ENCODE measurements at regions of chr11 and their contacts with region 1.

Region 1: DNA sequence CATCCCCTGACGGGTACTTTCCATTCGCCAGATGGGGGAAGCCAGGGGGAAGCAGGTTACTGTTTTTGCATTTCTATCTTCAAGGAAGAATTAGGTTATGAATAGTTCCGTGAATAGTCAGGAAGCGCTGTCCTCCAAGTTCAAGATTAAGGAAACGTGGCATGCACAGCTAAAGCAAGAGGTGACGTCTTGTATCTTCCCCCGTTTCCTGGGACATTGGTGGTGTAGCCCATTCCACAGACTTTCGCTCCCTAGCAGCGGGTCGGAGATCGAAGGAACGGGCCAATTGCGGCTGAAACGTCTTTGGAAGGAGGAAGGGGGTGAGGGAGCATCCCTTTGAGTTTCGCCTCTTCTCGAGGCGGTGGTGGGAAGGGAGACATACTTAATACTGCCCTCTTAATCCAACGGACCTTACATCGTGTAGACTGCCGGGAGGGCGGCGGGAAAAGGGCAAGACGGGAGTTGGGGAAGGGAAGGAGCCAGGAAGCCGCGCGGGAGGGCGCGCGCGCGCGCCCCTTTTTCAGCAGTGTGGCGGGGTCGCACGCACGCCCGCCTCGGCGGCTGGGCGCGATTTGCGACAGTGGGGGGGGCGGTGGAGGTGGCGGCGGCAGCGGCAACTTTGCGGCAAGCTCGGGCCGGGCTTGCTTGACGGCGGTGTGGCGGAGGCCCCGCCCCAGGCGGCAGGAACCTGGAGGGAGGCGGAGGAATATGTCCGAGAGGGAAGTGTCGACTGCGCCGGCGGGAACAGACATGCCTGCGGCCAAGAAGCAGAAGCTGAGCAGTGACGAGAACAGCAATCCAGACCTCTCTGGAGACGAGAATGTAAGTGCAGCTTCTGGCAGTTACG is at the start of gene EED:
- DNase-seq: peak; percentile 98
- ATAC-seq: peak; percentile 96
- total RNA-seq, gene EED: 12.7 TPM

Region 2: GRCh38 chr11:86302100-86302793 is 57.5 kb after region 1 on chr11 and contains the start of gene HIKESHI:
- intact Hi-C with region 1: loop called (anchors 5 kb)
- DNase-seq: peak; percentile 100
- ATAC-seq: peak; percentile 100
- total RNA-seq, gene HIKESHI: 51.5 TPM